Caco-2 (cell line): ENCODE measurements at regions of chr7 and their contacts with region 1.

Region 1: DNA sequence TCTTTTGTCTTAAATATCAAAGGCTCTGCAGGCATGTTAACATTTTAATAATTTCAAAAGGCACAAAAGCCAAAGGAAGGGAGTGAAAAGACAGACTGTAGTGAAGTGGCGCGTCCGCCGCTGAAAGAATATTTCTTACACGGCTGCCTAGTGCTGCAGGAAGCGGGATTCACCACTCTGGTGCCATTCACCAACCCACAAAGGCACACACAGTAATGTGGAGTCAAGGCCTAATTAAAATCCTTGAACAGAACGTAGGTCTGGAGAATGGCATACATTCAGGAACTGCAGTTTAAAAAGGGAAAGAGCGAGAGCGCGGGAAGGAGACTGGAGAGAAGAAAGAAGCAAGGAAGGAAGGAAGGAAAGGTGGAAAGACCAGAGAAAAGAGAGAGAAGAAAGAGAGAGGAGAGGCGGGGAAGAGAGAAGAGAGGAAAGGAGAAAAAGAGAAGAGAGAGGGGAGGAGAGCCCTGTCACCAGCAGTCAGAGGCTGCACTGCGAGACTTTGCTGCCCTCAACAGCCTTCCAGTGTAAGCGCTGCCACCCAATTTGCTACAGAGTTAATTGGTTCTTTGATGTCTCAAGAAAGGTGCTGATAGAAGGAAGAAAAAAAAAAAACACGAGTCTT is 554.0 kb downstream of the MDFIC start:
- DNase-seq: no peak
- H3K4me3 ChIP-seq: no peak overlapping the region
- H3K4me3 Mint-ChIP-seq: no peak overlapping the region
- H3K27ac Mint-ChIP-seq: no peak overlapping the region
- H3K4me1 ChIP-seq: no peaks in the 10 kb centered on the region
- H3K4me1 Mint-ChIP-seq: peaks cover 6% of the 10 kb centered on the region
- H3K27me3 ChIP-seq: no peaks in the 10 kb centered on the region
- H3K27me3 Mint-ChIP-seq: peaks cover 20% of the 10 kb centered on the region
- CTCF ChIP-seq: peak in 1 of 2 experiments; percentile 26

Region 2: DNA sequence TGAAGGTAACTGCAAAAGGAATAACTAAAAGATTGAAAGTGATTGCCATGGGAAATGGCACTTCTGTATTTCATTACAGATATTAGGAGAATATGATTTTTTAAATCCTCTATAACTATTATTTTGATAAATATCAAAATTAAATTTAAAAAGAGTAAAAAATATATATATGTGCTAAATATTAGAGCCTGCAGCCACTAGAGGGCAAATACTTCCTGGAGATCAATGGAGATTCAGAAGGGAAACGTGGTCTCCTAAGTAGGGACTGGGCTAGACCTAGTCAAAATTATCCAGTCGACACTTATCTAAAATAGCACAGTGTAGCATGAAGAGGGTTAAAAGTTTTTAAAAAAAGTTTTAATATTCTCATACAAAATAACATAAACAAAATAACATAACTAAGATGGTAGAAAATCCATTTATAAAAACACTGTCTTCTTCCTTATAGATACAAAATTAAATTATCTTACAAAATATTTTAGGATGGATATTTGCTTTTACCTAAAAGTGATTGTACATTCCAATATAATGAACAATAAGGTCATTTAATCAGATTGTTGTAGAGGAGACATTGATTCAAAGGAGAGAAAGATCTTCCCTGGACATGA is 119.6 kb before region 1 on chr7:
- CTCF ChIA-PET with region 1: no interaction called
- POLR2A ChIA-PET with region 1: no interaction called
- intact Hi-C with region 1: loop called (anchors 1 kb)
- DNase-seq: no peak
- H3K4me3 ChIP-seq: no peak overlapping the region
- H3K4me3 Mint-ChIP-seq: no peak overlapping the region
- H3K27ac Mint-ChIP-seq: no peak overlapping the region
- H3K4me1 ChIP-seq: no peaks in the 10 kb centered on the region
- H3K4me1 Mint-ChIP-seq: no peaks in the 10 kb centered on the region
- H3K27me3 ChIP-seq: no peaks in the 10 kb centered on the region
- H3K27me3 Mint-ChIP-seq: no peaks in the 10 kb centered on the region
- CTCF ChIP-seq: peak; percentile 28 to 51

Region 3: GRCh38 chr7:115799430-115799829 is 323.6 kb after region 1 on chr7:
- CTCF ChIA-PET with region 1: no interaction called
- POLR2A ChIA-PET with region 1: no interaction called
- intact Hi-C with region 1: loop called (anchors 5 kb)
- DNase-seq: no peak
- H3K4me3 ChIP-seq: no peak overlapping the region
- H3K4me3 Mint-ChIP-seq: no peak overlapping the region
- H3K27ac Mint-ChIP-seq: no peak overlapping the region
- H3K4me1 ChIP-seq: peaks cover 7% of the 10 kb centered on the region; the same call in 1 of the 2 replicates
- H3K4me1 Mint-ChIP-seq: peaks cover 6% of the 10 kb centered on the region
- H3K27me3 ChIP-seq: no peaks in the 10 kb centered on the region
- H3K27me3 Mint-ChIP-seq: peaks cover 5% of the 10 kb centered on the region
- CTCF ChIP-seq: no peak

Region 4: GRCh38 chr7:116367221-116367813 is 891.4 kb after region 1 on chr7:
- CTCF ChIA-PET with region 1: no interaction called
- POLR2A ChIA-PET with region 1: no interaction called
- intact Hi-C with region 1: no loop called
- DNase-seq: no peak
- H3K4me3 ChIP-seq: no peak overlapping the region
- H3K4me3 Mint-ChIP-seq: no peak overlapping the region
- H3K27ac Mint-ChIP-seq: no peak overlapping the region
- H3K4me1 ChIP-seq: no peaks in the 10 kb centered on the region
- H3K4me1 Mint-ChIP-seq: no peaks in the 10 kb centered on the region
- H3K27me3 ChIP-seq: 0 out of 2 replicates have a peak, but pooled peaks cover 2% of the 10 kb centered on the region
- H3K27me3 Mint-ChIP-seq: no peaks in the 10 kb centered on the region
- CTCF ChIP-seq: no peak